Activated CD8-positive, alpha-beta T cell treated with anti-CD3 and anti-CD28 coated beads for 36 hours (primary cell): ENCODE measurements at regions of chr17 and their contacts with region 1.

Region 1: GRCh38 chr17:79393358-79394202 is 217.3 kb downstream of the RBFOX3 start:
- DNase-seq: peak; percentile 81
- ATAC-seq: peak; percentile 83
- H3K4me3 Mint-ChIP-seq: no peak overlapping the region
- H3K27ac Mint-ChIP-seq: no peak overlapping the region
- H3K4me1 Mint-ChIP-seq: no peaks in the 10 kb centered on the region
- H3K27me3 Mint-ChIP-seq: peaks cover 45% of the 10 kb centered on the region
- CTCF ChIP-seq: peak; percentile 82

Region 2: GRCh38 chr17:79045842-79046196 is 347.8 kb before region 1 on chr17:
- CTCF ChIA-PET with region 1: interaction called, 9 read pairs
- POLR2A ChIA-PET with region 1: no interaction called
- intact Hi-C with region 1: loop called (anchors 10 kb)
- DNase-seq: peak; percentile 75
- ATAC-seq: peak; percentile 96
- H3K4me3 Mint-ChIP-seq: no peak overlapping the region
- H3K27ac Mint-ChIP-seq: no peak overlapping the region
- H3K4me1 Mint-ChIP-seq: no peaks in the 10 kb centered on the region
- H3K27me3 Mint-ChIP-seq: peaks cover 8% of the 10 kb centered on the region
- CTCF ChIP-seq: peak; percentile 79

Region 3: DNA sequence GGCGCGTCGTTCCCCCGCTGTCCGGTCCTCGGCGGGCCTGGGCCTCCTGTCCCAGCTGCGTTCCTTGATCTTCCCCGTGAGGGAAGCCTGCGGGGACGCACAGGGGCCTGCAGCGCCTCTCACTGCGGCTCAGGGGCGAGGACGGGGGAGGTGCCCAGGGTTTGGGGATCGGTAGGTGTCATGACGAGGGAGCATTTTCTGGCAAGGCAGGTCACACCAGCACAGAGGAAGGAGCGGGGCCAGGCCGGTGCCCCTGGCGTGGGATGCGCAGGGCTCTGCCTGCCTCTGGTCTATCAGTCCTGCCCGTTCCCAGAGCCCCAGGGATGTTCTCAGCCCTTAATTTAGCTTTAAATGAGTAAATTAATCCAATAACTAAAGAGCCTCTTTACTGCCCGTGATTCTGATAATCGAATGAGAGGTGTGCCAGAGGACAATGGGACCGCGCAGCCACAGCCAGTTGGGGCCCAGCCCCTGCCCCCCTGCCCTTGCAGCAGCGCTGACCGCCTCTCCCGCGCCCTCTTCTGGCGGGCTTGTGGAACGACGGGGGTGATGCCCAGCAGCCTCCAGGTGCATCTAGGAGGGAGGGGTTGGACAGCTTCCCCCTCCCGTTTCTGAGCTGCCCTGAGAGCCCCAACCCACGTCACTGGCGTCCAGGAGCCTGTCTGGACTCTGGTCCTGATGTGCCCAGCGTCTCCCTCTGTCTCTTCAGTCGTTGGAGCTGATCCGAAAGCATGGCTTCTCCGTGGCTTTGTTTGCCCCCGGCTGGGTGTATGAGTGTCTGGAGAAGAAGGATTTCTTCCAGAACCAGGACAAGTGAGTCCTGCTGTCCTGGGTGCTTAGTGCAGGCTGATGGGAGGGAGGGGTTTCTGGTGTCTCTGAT is 311.0 kb before region 1 on chr17:
- CTCF ChIA-PET with region 1: interaction called, 49 read pairs
- POLR2A ChIA-PET with region 1: no interaction called
- intact Hi-C with region 1: loop called (anchors 5 kb)
- DNase-seq: peak; percentile 56
- ATAC-seq: peak; percentile 76
- H3K4me3 Mint-ChIP-seq: no peak overlapping the region
- H3K27ac Mint-ChIP-seq: no peak overlapping the region
- H3K4me1 Mint-ChIP-seq: no peaks in the 10 kb centered on the region
- H3K27me3 Mint-ChIP-seq: no peaks in the 10 kb centered on the region
- CTCF ChIP-seq: peak; percentile 91

Region 4: GRCh38 chr17:79095345-79096055 is 298.1 kb before region 1 on chr17:
- CTCF ChIA-PET with region 1: interaction called, 22 read pairs
- POLR2A ChIA-PET with region 1: interaction called, 3 read pairs
- intact Hi-C with region 1: no loop called
- DNase-seq: peak; percentile 16
- ATAC-seq: no peak
- H3K4me3 Mint-ChIP-seq: no peak overlapping the region
- H3K27ac Mint-ChIP-seq: no peak overlapping the region
- H3K4me1 Mint-ChIP-seq: peaks cover 10% of the 10 kb centered on the region
- H3K27me3 Mint-ChIP-seq: peaks cover 23% of the 10 kb centered on the region
- CTCF ChIP-seq: no peak

Region 5: GRCh38 chr17:79366988-79367571 is 26.5 kb before region 1 on chr17:
- CTCF ChIA-PET with region 1: no interaction called
- POLR2A ChIA-PET with region 1: no interaction called
- intact Hi-C with region 1: no loop called
- DNase-seq: no peak
- ATAC-seq: no peak
- H3K4me3 Mint-ChIP-seq: no peak overlapping the region
- H3K27ac Mint-ChIP-seq: no peak overlapping the region
- H3K4me1 Mint-ChIP-seq: no peaks in the 10 kb centered on the region
- H3K27me3 Mint-ChIP-seq: peaks cover 7% of the 10 kb centered on the region
- CTCF ChIP-seq: no peak

Region 6: GRCh38 chr17:79406316-79406715 is 12.7 kb after region 1 on chr17:
- CTCF ChIA-PET with region 1: interaction called, 59 read pairs
- POLR2A ChIA-PET with region 1: no interaction called
- intact Hi-C with region 1: no loop called
- DNase-seq: no peak
- ATAC-seq: no peak
- H3K4me3 Mint-ChIP-seq: no peak overlapping the region
- H3K27ac Mint-ChIP-seq: no peak overlapping the region
- H3K4me1 Mint-ChIP-seq: peaks cover 2% of the 10 kb centered on the region
- H3K27me3 Mint-ChIP-seq: peaks cover 38% of the 10 kb centered on the region
- CTCF ChIP-seq: no peak

Region 7: GRCh38 chr17:79457376-79457775 is 63.8 kb after region 1 on chr17:
- CTCF ChIA-PET with region 1: no interaction called
- POLR2A ChIA-PET with region 1: no interaction called
- intact Hi-C with region 1: no loop called
- DNase-seq: no peak
- ATAC-seq: no peak
- H3K4me3 Mint-ChIP-seq: no peak overlapping the region
- H3K27ac Mint-ChIP-seq: no peak overlapping the region
- H3K4me1 Mint-ChIP-seq: no peaks in the 10 kb centered on the region
- H3K27me3 Mint-ChIP-seq: no peaks in the 10 kb centered on the region
- CTCF ChIP-seq: no peak